ENCODE measurements at regions of chr6 and their contacts with region 1.

Region 1: GRCh38 chr6:43120944-43121913 is 45.1 kb downstream of the PTK7 start:
- DNase-seq: peak; percentile 95
- H3K4me3 ChIP-seq: no peak overlapping the region
- H3K27me3 ChIP-seq: no peaks in the 10 kb centered on the region
- CTCF ChIP-seq: peak; percentile 36

Region 2: DNA sequence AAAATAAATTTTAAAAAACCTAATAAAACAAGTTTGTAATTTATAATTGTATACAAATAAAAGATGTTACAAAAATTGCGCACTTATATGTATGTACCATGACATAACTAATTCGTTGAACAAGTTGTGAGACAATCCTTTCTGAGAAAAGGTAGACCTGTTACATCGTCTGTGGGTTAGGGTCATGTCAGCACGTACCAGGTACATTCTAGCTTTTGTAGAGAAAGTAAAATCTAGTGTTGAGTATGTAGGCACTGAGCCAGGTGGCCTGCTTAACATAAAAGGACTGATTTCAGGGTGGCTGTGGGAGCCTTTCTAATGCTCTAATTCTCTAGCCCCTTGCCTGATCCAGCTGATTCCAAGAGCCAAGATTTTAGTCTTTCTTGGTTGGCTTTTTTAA is 231.4 kb before region 1 on chr6:
- CTCF ChIA-PET with region 1: no interaction called
- POLR2A ChIA-PET with region 1: interaction called, 15 read pairs
- DNase-seq: no peak
- H3K4me3 ChIP-seq: peak overlapping the region; percentile 65
- H3K27me3 ChIP-seq: no peaks in the 10 kb centered on the region
- CTCF ChIP-seq: no peak

Region 3: GRCh38 chr6:43181942-43182860 is 61.0 kb after region 1 on chr6 and contains the start of gene CUL9:
- CTCF ChIA-PET with region 1: no interaction called
- POLR2A ChIA-PET with region 1: no interaction called
- DNase-seq: no peak
- H3K4me3 ChIP-seq: peak within 1 kb of the TSS; percentile 77
- H3K27me3 ChIP-seq: no peaks in the 10 kb centered on the region
- CTCF ChIP-seq: no peak
- polyA plus RNA-seq, gene CUL9: 9.7 and 12.4 TPM in 2 replicates